ENCODE measurements at regions of chr2 and their contacts with region 1.

Region 1: DNA sequence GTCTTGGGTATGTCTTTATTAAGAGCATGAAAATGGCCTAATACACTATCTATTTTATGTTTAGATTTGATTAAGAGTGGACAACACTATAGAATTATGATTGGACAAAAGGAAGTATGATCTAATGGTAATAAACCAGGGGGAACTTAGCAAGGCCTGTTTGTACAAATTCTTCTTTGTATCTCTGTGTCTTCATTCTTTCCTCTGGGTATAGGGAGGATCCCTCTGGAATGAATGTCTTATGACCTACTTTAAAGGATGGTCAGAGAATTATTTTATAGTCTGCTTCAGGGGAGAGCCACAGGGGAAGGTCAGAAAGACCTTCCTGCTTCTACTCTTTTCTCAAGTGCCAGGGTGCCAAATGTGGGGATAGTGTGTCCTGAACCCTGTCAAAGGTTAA is 42.8 kb upstream of the FANCL start:
- DNase-seq: no peak
- ATAC-seq: no peak
- H3K4me3 ChIP-seq: no peak overlapping the region
- H3K4me3 Mint-ChIP-seq: no peak overlapping the region
- H3K27ac ChIP-seq: no peak overlapping the region
- H3K27ac Mint-ChIP-seq: no peak overlapping the region
- H3K4me1 ChIP-seq: no peaks in the 10 kb centered on the region
- H3K4me1 Mint-ChIP-seq: no peaks in the 10 kb centered on the region
- H3K27me3 ChIP-seq: no peaks in the 10 kb centered on the region
- H3K27me3 Mint-ChIP-seq: peaks cover 2 to 4% of the 10 kb centered on the region in 2 donors

Region 2: DNA sequence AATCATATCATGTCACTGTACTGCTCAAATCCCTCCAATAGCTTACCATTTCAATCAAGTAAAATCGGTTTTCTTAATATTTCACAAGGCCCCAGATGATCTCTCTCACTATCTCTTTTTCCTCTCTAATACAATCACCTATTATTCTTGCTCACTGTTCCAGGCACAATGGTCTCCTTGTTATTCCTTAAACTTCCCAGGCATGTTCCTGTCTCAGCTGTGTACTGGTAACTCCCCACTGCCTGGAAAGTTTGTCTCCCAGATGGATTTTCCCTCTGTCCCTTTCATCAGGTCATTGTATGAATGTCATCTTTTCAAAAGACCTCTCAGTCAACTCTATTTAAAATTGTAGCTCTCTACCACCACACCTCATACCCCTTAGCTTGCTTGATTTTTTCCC is 12.1 kb before region 1 on chr2:
- CTCF ChIA-PET with region 1: interaction called in 1 of 2 experiments, 19 read pairs
- POLR2A ChIA-PET with region 1: no interaction called
- DNase-seq: no peak
- ATAC-seq: no peak
- H3K4me3 ChIP-seq: no peak overlapping the region
- H3K4me3 Mint-ChIP-seq: no peak overlapping the region
- H3K27ac ChIP-seq: no peak overlapping the region
- H3K27ac Mint-ChIP-seq: no peak overlapping the region
- H3K4me1 ChIP-seq: no peaks in the 10 kb centered on the region
- H3K4me1 Mint-ChIP-seq: no peaks in the 10 kb centered on the region
- H3K27me3 ChIP-seq: no peaks in the 10 kb centered on the region
- H3K27me3 Mint-ChIP-seq: peaks cover 0 to 9% of the 10 kb centered on the region in 2 donors

Region 3: DNA sequence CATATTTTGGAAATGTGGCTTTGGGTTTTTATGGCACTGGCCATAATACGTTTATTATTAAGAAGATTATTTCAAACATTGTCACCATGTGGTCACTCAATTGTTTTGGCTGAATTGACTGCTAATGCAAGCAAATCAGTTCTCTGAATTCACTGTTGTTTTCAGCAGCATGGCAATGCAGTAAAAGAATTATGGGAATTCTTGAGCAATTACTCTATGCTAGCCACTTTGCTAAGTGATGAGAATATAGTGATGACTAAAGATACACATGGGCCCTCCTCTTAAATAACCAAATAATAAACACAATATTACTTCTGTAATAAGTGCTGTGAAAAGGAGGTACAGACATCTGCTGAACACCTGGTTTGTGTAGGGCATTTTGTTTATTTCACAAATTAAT is 15.2 kb after region 1 on chr2:
- CTCF ChIA-PET with region 1: no interaction called
- POLR2A ChIA-PET with region 1: no interaction called
- DNase-seq: no peak
- ATAC-seq: no peak
- H3K4me3 ChIP-seq: no peak overlapping the region
- H3K4me3 Mint-ChIP-seq: no peak overlapping the region
- H3K27ac ChIP-seq: no peak overlapping the region
- H3K27ac Mint-ChIP-seq: no peak overlapping the region
- H3K4me1 ChIP-seq: no peaks in the 10 kb centered on the region
- H3K4me1 Mint-ChIP-seq: no peaks in the 10 kb centered on the region
- H3K27me3 ChIP-seq: no peaks in the 10 kb centered on the region
- H3K27me3 Mint-ChIP-seq: peaks cover under 1 to 11% of the 10 kb centered on the region in 2 donors

Region 4: DNA sequence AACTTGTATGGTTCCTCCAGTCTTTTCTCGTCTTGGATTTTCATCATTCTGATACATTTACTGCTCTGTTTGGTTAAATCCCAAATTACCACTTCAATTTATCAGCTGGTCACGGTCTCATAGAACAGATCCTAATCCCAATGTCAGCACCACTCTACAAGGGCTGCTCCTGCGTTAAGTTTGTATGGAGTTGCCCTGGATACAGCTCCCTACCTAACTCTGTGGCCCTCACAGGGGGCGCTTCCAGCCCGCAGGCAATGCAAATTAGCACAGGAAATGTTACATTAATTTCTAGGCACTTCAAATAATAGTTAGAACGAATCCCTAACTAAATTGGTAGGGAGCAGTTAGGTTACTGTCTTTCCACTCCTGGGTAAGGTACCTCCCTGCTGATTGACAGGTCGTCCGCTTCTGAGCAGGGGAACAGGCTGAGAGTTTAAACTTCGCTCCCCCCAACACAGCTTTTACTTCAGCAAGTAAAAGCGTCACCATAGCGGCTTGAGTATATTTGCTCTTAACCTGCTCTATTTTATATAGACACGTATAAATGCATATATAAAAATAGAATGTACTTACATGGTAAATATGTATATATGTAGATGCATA is 195.7 kb after region 1 on chr2:
- CTCF ChIA-PET with region 1: no interaction called
- POLR2A ChIA-PET with region 1: no interaction called
- DNase-seq: no peak
- ATAC-seq: no peak
- H3K4me3 ChIP-seq: no peak overlapping the region
- H3K4me3 Mint-ChIP-seq: no peak overlapping the region
- H3K27ac ChIP-seq: no peak overlapping the region
- H3K27ac Mint-ChIP-seq: no peak overlapping the region
- H3K4me1 ChIP-seq: no peaks in the 10 kb centered on the region
- H3K4me1 Mint-ChIP-seq: no peaks in the 10 kb centered on the region
- H3K27me3 ChIP-seq: no peaks in the 10 kb centered on the region
- H3K27me3 Mint-ChIP-seq: no peaks in the 10 kb centered on the region

Region 5: DNA sequence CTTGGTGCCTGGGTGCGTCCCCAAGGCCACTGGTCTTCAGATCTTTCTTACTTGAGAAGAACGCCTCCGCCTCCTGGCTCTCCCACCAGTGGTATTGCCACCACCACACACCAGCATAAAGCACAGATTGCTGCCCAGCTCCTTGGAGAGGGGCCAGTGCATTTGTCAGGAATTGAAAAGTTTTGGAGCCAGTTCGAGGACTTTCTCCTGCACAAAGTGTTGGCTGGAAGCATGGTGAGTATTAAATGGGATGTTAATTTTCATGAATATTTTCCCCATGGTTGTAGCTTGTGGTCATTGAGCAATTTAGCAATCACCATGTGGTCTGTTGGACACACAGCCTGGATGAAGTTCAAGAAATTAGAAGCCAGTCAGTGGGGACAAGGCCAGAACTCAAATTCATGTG is 641.7 kb after region 1 on chr2:
- CTCF ChIA-PET with region 1: no interaction called
- POLR2A ChIA-PET with region 1: no interaction called
- DNase-seq: no peak
- ATAC-seq: no peak
- H3K4me3 ChIP-seq: no peak overlapping the region
- H3K4me3 Mint-ChIP-seq: no peak overlapping the region
- H3K27ac ChIP-seq: no peak overlapping the region
- H3K27ac Mint-ChIP-seq: no peak overlapping the region
- H3K4me1 ChIP-seq: no peaks in the 10 kb centered on the region
- H3K4me1 Mint-ChIP-seq: no peaks in the 10 kb centered on the region
- H3K27me3 ChIP-seq: no peaks in the 10 kb centered on the region
- H3K27me3 Mint-ChIP-seq: peaks cover 0 to 3% of the 10 kb centered on the region in 2 donors